ENCODE measurements at regions of chr11 and their contacts with region 1.

Region 1: DNA sequence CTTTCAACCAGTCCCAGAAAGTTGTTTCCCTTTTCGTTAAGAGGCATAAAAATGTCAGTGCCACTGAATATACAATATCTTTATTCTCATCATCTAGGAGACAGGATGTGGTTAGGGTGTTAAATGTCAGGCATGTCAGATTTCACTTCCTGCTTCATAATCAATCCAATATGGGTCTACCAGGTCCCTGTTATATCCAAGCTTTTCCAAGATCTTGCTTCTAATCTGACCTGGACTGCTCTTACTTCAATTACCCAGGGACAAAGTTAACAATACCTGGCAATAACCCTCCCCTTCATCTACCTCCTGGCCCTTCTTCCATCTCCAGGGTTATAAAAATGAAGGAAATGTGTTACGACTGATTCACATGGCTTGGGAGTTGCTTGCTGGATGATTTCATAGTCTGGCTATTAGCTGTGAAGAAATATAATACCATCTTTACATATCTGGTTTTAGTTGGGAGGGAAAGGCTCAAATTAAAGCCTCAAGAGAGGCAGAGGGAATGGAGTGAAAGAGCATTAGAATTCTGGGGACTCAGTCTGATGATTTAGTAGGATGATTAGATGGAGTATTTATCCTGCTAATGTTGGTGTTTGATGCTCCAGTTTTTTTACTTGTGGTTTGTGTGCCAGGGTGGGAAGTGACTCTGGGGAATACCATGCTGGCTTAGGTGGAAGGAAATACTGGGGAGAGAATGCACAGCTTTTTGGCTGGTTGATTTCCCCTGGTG is 534.3 kb downstream of the ETS1 start:
- DNase-seq: no peak
- H3K4me3 Mint-ChIP-seq: peak overlapping the region; percentile 45
- H3K27ac Mint-ChIP-seq: peak overlapping the region; percentile 99
- H3K4me1 Mint-ChIP-seq: peaks cover 53% of the 10 kb centered on the region
- H3K27me3 Mint-ChIP-seq: no peaks in the 10 kb centered on the region
- CTCF ChIP-seq: no peak

Region 2: DNA sequence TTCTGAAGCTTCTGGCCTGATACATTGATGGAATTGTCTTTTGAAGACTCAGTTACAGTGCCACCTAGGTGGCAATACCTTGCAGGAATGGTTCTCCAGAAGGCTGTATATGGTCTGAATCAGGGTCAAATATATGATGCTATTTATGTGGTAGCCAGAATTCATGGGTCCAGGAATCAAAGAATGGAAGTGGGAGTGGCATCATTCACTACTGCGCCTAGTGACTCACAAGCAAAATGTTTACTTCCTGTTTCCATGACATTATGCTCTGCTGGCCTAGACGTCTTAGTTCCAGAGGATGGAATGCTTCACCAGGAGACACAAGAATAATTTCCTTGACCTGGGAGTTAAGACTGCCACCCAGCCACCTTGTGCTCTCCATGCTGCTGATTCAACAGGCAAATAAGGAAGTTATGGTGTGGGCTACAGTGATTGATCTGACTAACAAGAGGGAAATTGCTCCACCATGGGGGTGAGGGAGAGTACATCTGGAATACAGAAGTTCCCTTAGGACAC is 42.4 kb after region 1 on chr11:
- CTCF ChIA-PET with region 1: no interaction called
- intact Hi-C with region 1: loop called (anchors 1 kb)
- DNase-seq: peak; percentile 20
- H3K4me3 Mint-ChIP-seq: no peak overlapping the region
- H3K27ac Mint-ChIP-seq: peak overlapping the region; percentile 64
- H3K4me1 Mint-ChIP-seq: peaks cover 8% of the 10 kb centered on the region
- H3K27me3 Mint-ChIP-seq: no peaks in the 10 kb centered on the region
- CTCF ChIP-seq: no peak

Region 3: DNA sequence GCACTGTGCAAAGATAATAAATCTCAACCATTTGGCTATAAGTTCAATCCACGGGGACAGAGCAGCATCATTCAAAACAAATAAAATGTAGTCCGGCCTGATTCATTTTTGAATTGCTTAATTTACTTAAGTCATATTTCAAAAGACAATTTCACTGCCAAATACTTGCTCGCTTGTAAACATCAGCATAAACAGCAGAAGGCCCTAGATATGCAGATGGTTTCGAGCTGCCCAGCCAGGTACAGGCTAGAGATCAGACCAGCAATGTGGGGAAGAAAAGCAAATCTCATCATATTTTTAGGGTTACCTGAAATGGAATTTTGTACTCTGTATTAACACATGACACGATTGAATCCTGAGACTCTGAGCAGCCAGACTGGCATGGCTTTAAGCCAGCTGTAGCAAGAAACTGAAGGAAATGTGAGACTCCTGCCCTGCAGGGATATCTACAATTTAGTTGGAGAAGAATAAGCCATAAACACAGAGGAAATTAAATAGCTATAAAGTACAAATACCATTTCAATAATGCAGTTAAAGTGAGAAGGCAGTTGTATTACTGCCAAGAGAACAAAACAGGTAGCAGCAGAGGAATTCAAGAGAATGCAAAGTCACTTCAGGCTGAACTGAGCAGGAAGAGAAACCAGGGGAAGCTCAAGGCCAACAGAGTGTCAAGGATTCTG is 94.0 kb after region 1 on chr11:
- CTCF ChIA-PET with region 1: no interaction called
- intact Hi-C with region 1: loop called (anchors 5 kb)
- DNase-seq: no peak
- H3K4me3 Mint-ChIP-seq: no peak overlapping the region
- H3K27ac Mint-ChIP-seq: peak overlapping the region; percentile 50
- H3K4me1 Mint-ChIP-seq: peaks cover 11% of the 10 kb centered on the region
- H3K27me3 Mint-ChIP-seq: no peaks in the 10 kb centered on the region
- CTCF ChIP-seq: no peak